ENCODE measurements at regions of chr3 and their contacts with region 1.

Region 1: DNA sequence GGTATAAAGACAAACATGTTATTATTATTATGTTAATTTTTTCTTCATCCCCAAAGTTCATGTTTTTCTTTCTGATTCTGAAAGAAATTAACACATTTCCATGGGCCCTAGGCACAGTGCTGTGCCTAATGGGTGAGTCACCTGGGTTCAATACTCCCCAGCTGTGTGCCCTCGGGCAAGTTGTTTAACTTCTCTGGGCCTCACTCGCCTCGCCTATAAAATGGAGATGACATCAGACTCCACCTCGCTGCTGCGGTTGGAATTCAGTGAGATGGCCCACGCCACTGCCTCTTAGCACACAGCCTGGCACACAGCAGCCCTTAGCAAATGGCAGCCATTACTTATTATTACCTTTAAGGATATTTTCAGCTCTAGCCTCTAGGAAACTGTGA is 22.6 kb downstream of the DNASE1L3 start:
- DNase-seq: no peak
- ATAC-seq: peak; percentile 57
- H3K4me3 ChIP-seq: no peak overlapping the region
- H3K27ac ChIP-seq: no peak overlapping the region
- H3K4me1 ChIP-seq: peaks cover 2 to 11% of the 10 kb centered on the region in 2 experiments; a peak in 3 of 4 replicates
- H3K27me3 ChIP-seq: no peaks in the 10 kb centered on the region
- CTCF ChIP-seq: no peak
- POLR2A ChIP-seq: no peak
- RAD21 ChIP-seq: no peak

Region 2: GRCh38 chr3:57951066-57951882 is 236.9 kb before region 1 on chr3:
- CTCF ChIA-PET with region 1: no interaction called
- POLR2A ChIA-PET with region 1: no interaction called
- RAD21 ChIA-PET with region 1: no interaction called
- intact Hi-C with region 1: no loop called
- DNase-seq: peak; percentile 33
- ATAC-seq: peak; percentile 71
- H3K4me3 ChIP-seq: no peak overlapping the region
- H3K27ac ChIP-seq: peak overlapping the region; percentile 48
- H3K4me1 ChIP-seq: peaks cover 27 to 37% of the 10 kb centered on the region in 2 experiments
- H3K27me3 ChIP-seq: no peaks in the 10 kb centered on the region
- CTCF ChIP-seq: no peak
- POLR2A ChIP-seq: no peak
- RAD21 ChIP-seq: no peak

Region 3: DNA sequence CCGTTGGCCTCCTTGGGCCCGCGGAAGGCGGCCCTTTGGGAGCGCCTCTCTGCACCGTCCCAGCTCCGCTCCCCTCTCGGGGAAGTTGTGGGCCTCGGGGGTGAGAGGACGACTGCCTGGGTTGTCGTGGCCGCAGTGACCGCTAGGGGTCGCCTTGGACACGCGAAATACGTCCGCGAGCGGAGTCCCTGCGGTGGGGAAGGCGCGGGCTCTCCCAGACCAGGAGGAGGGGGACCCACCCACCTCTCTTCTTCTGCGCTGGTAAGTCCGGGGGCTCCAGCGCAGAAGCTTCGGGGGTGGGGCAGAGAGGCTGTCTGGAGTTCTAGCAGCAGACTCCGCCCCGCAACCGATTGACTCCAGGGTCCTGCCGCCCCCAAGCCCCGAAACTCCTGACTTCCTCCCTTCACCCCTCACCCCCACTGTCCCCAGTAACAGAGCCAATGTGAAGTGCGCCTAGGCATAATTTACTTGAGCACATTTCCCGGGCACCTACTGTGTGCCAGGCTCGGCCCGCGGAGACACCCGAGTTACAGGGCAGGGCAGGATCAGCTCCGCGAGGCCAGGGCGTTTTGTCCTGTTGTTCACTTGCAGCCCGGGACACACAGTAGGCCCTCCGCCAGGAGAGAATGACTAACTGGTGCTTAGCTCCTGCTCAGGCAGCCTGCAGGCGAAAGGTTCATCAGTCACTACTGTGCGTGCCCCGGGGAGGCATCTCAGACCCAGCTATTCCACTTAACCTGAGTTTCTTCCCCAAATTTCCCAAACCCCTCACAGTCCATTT is 10.2 kb before region 1 on chr3:
- CTCF ChIA-PET with region 1: interaction called, 18 read pairs
- POLR2A ChIA-PET with region 1: no interaction called
- RAD21 ChIA-PET with region 1: interaction called in 1 of 2 experiments, 3 read pairs
- intact Hi-C with region 1: no loop called
- DNase-seq: peak; percentile 51
- ATAC-seq: peak; percentile 89
- H3K4me3 ChIP-seq: peak overlapping the region; percentile 43 to 51
- H3K27ac ChIP-seq: no peak overlapping the region; the same call in 1 of the 2 replicates
- H3K4me1 ChIP-seq: peaks cover 19 to 51% of the 10 kb centered on the region in 2 experiments; a peak in 3 of 4 replicates
- H3K27me3 ChIP-seq: no peaks in the 10 kb centered on the region
- CTCF ChIP-seq: peak; percentile 76 to 87 (median 87)
- POLR2A ChIP-seq: no peak
- RAD21 ChIP-seq: peak; percentile 83

Region 4: GRCh38 chr3:58217209-58217811 is 29.1 kb after region 1 on chr3:
- CTCF ChIA-PET with region 1: interaction called, 24 read pairs
- POLR2A ChIA-PET with region 1: interaction called, 3 read pairs
- RAD21 ChIA-PET with region 1: interaction called, 3 to 4 read pairs
- intact Hi-C with region 1: loop called (anchors 1 kb)
- DNase-seq: peak; percentile 90
- ATAC-seq: peak; percentile 97
- H3K4me3 ChIP-seq: peak overlapping the region in 1 of 2 experiments; percentile 46; a peak in 3 of 4 replicates
- H3K27ac ChIP-seq: peak overlapping the region; percentile 49
- H3K4me1 ChIP-seq: peaks cover 18 to 38% of the 10 kb centered on the region in 2 experiments
- H3K27me3 ChIP-seq: no peaks in the 10 kb centered on the region
- CTCF ChIP-seq: peak; percentile 81 to 90 (median 83)
- POLR2A ChIP-seq: no peak
- RAD21 ChIP-seq: peak; percentile 55

Region 5: DNA sequence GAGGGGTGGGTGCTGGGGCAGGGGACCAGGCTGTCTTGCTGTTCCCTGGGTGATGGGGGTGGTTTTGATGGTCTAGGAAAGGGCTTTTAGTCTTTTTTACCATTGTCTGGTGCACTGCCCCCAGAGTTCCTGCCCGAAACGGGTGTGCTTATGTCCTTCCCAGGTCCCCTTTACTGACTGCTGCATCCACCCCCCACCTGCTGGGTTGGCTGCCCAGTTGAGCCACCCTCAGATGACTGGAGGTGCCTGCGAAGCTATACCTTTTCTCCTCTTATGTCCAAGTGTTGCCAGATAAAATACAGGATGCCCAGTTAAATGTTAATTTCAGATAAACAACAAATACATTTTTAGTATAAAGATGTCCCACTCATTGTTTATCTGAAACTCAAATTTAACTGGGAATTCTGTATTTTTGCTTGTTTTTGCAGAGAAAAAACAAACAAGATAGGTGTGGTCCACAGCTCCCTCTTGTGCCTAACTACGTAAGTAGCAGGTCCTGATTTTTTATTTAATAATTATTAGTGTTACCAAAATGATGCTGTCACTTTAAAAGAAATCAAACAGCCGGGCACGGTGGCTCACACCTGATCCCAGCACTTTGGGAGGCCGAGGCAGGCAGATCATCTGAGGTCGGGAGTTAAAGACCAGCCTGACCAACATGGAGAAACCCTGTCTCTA is 111.8 kb after region 1 on chr3:
- CTCF ChIA-PET with region 1: interaction called, 116 read pairs
- POLR2A ChIA-PET with region 1: interaction called, 3 read pairs
- RAD21 ChIA-PET with region 1: interaction called, 15 to 25 read pairs
- intact Hi-C with region 1: loop called (anchors 1 kb)
- DNase-seq: no peak
- ATAC-seq: peak; percentile 79
- H3K4me3 ChIP-seq: no peak overlapping the region
- H3K27ac ChIP-seq: no peak overlapping the region
- H3K4me1 ChIP-seq: no peaks in the 10 kb centered on the region
- H3K27me3 ChIP-seq: no peaks in the 10 kb centered on the region
- CTCF ChIP-seq: peak; percentile 52 to 93 (median 64)
- POLR2A ChIP-seq: no peak
- RAD21 ChIP-seq: peak; percentile 93

Region 6: DNA sequence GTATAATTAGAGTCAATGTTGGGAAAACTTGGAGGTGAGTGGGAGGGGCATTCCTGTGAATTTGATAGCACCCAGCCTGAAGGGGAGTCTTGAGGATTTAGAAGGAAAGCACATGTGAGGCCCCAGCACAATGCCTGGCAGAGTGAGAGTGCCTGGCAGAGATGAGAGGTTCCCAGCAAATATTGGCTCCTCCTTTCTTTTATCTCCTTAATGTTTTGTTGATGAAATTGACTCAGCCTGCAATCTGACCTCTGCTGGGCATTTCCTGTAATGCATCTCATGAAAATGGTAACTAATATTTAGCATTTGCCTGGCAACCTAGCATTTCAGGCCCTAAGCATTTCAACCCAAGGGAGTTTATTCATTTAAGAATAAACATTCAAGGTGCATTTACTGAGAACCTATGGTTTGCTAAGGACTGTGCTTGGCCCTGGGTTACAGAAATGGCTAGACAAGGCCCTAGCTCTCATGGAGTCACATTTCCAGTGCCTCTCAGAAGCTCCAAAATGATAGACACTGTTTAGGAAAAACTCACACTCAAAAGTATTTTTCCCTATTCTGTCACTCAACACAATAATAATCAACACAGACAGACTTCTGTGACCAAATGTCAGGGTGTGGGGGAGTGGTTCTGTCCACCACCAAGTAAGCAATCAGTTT is 226.5 kb after region 1 on chr3:
- CTCF ChIA-PET with region 1: interaction called, 6 read pairs
- POLR2A ChIA-PET with region 1: no interaction called
- RAD21 ChIA-PET with region 1: interaction called in 1 of 2 experiments, 3 read pairs
- intact Hi-C with region 1: loop called (anchors 2 kb)
- DNase-seq: peak; percentile 44
- ATAC-seq: peak; percentile 86
- H3K4me3 ChIP-seq: no peak overlapping the region
- H3K27ac ChIP-seq: no peak overlapping the region
- H3K4me1 ChIP-seq: peaks cover 2 to 3% of the 10 kb centered on the region in 2 experiments; a peak in 3 of 4 replicates
- H3K27me3 ChIP-seq: no peaks in the 10 kb centered on the region
- CTCF ChIP-seq: peak; percentile 66 to 87 (median 80)
- POLR2A ChIP-seq: no peak
- RAD21 ChIP-seq: peak; percentile 74

Region 7: DNA sequence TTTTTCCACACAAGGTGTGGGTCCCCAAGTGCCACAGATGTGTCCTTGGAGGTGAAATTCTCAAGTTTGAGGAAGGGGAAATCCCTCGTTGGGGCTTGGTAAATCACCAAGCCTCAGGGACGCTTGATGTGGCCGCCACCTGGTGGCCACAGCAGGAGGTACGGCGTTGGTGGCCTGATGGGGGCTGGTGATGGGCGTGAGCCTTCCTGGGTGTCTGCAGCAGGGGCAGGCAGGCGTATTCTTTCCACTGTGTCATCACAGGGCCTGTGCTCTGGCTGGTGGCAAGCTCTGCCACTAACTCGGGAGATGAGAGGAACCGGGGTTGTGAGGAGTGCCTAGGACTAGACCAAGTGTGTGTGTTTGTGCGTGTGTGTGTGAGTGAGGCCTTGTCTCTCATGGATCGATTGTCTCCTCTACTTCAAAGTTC is 344.6 kb after region 1 on chr3:
- CTCF ChIA-PET with region 1: interaction called, 4 read pairs
- POLR2A ChIA-PET with region 1: no interaction called
- RAD21 ChIA-PET with region 1: no interaction called
- intact Hi-C with region 1: loop called (anchors 2 kb)
- DNase-seq: peak; percentile 69
- ATAC-seq: peak; percentile 91
- H3K4me3 ChIP-seq: 0 out of 4 replicates have a peak overlapping the region, but pooled peaks of 1 of the 2 experiments have one; percentile 12
- H3K27ac ChIP-seq: no peak overlapping the region
- H3K4me1 ChIP-seq: peaks cover 2 to 14% of the 10 kb centered on the region in 2 experiments; a peak in 2 of 4 replicates
- H3K27me3 ChIP-seq: no peaks in the 10 kb centered on the region
- CTCF ChIP-seq: peak; percentile 91 to 95 (median 94)
- POLR2A ChIP-seq: no peak
- RAD21 ChIP-seq: peak; percentile 95